Activated T-helper 2 cell treated with anti-CD3 and anti-CD28 coated beads, Interferon-gamma antibody, Interleukin-2, Interleukin-4, amounts not matched to agents 10 μg/mL and 5 μg/mL and 100 μg/mL, durations not matched to agents 14 hours and 24 hours and 36 hours (primary cell): ENCODE measurements at regions of chr19 and their contacts with region 1.

Region 1: DNA sequence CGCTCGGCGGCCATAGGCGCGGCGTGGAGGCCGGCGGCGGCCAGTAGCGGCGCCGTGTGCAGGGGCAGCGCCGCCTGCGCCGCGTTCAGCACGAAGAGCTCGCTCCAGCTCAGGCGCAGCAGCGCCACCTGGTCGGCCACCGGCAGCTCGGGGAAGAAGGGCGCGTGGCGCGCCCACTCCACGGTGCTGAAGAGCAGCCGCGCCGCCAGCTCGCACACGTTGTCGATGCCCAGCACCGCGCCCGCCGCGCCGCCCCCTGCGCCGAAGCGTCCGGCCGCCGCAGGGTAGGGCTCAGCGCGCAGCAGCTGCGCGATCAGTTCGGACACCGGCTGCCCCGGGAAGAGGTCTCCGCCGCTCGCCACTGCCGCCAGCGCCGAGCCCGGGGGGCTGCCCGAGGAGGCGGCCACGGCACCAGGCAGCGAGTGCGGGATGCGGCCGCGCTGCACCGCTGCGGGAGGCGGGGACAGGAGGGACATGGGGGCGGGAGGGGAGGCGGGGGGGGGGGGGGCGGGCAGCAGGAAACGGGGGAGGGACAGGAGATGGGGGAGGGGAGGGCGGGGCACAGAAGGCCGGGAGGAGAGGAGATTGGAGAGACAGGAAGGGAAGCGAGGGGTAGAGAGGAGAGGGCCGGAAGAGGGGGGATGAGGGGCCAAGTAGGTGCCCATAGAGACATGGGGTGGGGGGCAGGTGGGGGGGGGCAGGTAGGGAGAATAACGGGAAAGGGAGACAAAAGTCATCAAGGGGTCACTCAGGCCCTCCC is 9.8 kb downstream of the OCEL1 start:
- DNase-seq: peak; percentile 69
- H3K4me3 Mint-ChIP-seq: peak overlapping the region; percentile 76
- H3K27ac Mint-ChIP-seq: peak overlapping the region; percentile 58
- H3K4me1 Mint-ChIP-seq: peaks cover 2% of the 10 kb centered on the region
- H3K27me3 Mint-ChIP-seq: no peaks in the 10 kb centered on the region

Region 2: GRCh38 chr19:17075035-17075863 is 160.5 kb before region 1 on chr19 and contains the starts of genes HAUS8 and MYO9B:
- intact Hi-C with region 1: loop called (anchors 2 kb)
- DNase-seq: peak; percentile 100
- H3K4me3 Mint-ChIP-seq: peak within 1 kb of the TSS; percentile 99
- H3K27ac Mint-ChIP-seq: peak within 1 kb of the TSS; percentile 97
- H3K4me1 Mint-ChIP-seq: peaks cover 52% of the 10 kb centered on the region
- H3K27me3 Mint-ChIP-seq: no peaks in the 10 kb centered on the region
- total RNA-seq, gene HAUS8: 27.8 and 28.8 TPM in 2 replicates
- total RNA-seq, gene MYO9B: 143 TPM in 2 replicates

Region 3: DNA sequence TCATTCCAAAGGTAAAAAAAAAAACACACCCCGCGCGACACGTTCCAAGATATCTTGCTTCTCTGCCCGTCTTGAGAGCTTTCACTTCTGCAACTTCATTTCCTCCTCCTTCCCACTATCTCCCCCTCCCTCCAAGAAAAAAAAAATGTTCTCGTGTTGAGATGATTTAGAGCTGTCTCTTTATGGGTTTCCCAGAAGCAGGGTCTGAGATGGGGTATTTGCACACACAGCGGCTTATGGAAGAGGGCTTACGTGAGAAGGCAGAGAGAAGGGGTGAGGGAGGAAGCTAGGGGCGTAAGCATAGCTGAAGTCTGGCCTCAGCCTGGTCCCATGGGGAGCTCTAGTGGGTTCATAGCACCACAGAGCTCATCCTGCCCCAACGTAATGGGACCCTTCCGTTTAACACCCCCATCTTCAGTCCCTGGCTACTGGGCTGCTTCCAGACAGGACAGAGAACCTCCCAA is 51.9 kb before region 1 on chr19:
- intact Hi-C with region 1: loop called (anchors 1 kb)
- DNase-seq: no peak
- H3K4me3 Mint-ChIP-seq: peak overlapping the region; percentile 77
- H3K27ac Mint-ChIP-seq: peak overlapping the region; percentile 91
- H3K4me1 Mint-ChIP-seq: peaks cover 16% of the 10 kb centered on the region
- H3K27me3 Mint-ChIP-seq: no peaks in the 10 kb centered on the region

Region 4: GRCh38 chr19:17246681-17247425 is 11.1 kb after region 1 on chr19:
- intact Hi-C with region 1: no loop called
- DNase-seq: no peak
- H3K4me3 Mint-ChIP-seq: peak overlapping the region; percentile 83
- H3K27ac Mint-ChIP-seq: no peak overlapping the region
- H3K4me1 Mint-ChIP-seq: peaks cover 2% of the 10 kb centered on the region
- H3K27me3 Mint-ChIP-seq: peaks cover 16% of the 10 kb centered on the region

Region 5: GRCh38 chr19:17455308-17456123 is 219.7 kb after region 1 on chr19:
- intact Hi-C with region 1: no loop called
- DNase-seq: no peak
- H3K4me3 Mint-ChIP-seq: no peak overlapping the region
- H3K27ac Mint-ChIP-seq: no peak overlapping the region
- H3K4me1 Mint-ChIP-seq: peaks cover 8% of the 10 kb centered on the region
- H3K27me3 Mint-ChIP-seq: peaks cover 33% of the 10 kb centered on the region